Activated CD4-positive, alpha-beta memory T cell treated with anti-CD3 and anti-CD28 coated beads, Interleukin-2, amount 10 ng/mL, durations not matched to agents 7 days and 5 days (primary cell): ENCODE measurements at regions of chr2 and their contacts with region 1.

Region 1: GRCh38 chr2:26345545-26346453 is at the start of gene SELENOI:
- DNase-seq: peak; percentile 99
- H3K4me3 Mint-ChIP-seq: peak within 1 kb of the TSS; percentile 94
- H3K27ac Mint-ChIP-seq: peak within 1 kb of the TSS; percentile 89
- H3K4me1 Mint-ChIP-seq: peaks cover 38% of the 10 kb centered on the region
- H3K27me3 Mint-ChIP-seq: no peaks in the 10 kb centered on the region
- total RNA-seq, gene SELENOI: 22.9 to 31.4 TPM

Region 2: GRCh38 chr2:26244309-26245121 is 101.3 kb before region 1 on chr2 and contains the starts of genes HADHA and HADHB:
- CTCF ChIA-PET with region 1: interaction called, 4 read pairs
- POLR2A ChIA-PET with region 1: interaction called, 66 read pairs
- DNase-seq: peak; percentile 84
- H3K4me3 Mint-ChIP-seq: peak within 1 kb of the TSS; percentile 100
- H3K27ac Mint-ChIP-seq: peak within 1 kb of the TSS; percentile 98
- H3K4me1 Mint-ChIP-seq: peaks cover 55% of the 10 kb centered on the region
- H3K27me3 Mint-ChIP-seq: no peaks in the 10 kb centered on the region
- total RNA-seq, gene HADHA: 108 to 110 TPM
- total RNA-seq, gene HADHB: 71.4 to 72.6 TPM

Region 3: DNA sequence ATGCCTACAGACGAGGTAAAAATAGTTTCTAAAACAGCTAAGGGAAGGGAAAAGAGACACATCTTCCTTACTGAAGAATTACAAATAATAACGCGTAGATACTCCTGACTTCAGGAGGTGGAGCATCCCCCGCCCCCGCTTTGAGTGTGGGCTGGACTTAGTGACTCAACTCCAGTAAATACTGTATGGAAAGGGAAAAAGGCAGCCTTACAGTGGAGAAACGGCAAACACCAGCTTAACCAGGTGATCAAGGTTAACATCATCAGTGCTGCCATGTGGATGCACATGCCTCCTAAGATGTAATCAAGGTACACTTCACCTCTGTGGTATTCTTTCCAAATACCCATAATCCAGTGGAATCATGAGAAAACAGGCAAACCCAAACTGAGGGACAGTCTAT is 53.1 kb before region 1 on chr2:
- CTCF ChIA-PET with region 1: no interaction called
- POLR2A ChIA-PET with region 1: no interaction called
- DNase-seq: no peak
- H3K4me3 Mint-ChIP-seq: no peak overlapping the region
- H3K27ac Mint-ChIP-seq: no peak overlapping the region
- H3K4me1 Mint-ChIP-seq: no peaks in the 10 kb centered on the region
- H3K27me3 Mint-ChIP-seq: peaks cover 19% of the 10 kb centered on the region

Region 4: GRCh38 chr2:26330113-26330549 is 15.7 kb before region 1 on chr2:
- CTCF ChIA-PET with region 1: interaction called, 15 read pairs
- POLR2A ChIA-PET with region 1: interaction called, 24 read pairs
- DNase-seq: peak; percentile 88
- H3K4me3 Mint-ChIP-seq: no peak overlapping the region
- H3K27ac Mint-ChIP-seq: no peak overlapping the region
- H3K4me1 Mint-ChIP-seq: peaks cover 41% of the 10 kb centered on the region
- H3K27me3 Mint-ChIP-seq: no peaks in the 10 kb centered on the region

Region 5: GRCh38 chr2:26335231-26335630 is 10.6 kb before region 1 on chr2:
- CTCF ChIA-PET with region 1: interaction called, 15 read pairs
- POLR2A ChIA-PET with region 1: interaction called, 24 read pairs
- DNase-seq: no peak
- H3K4me3 Mint-ChIP-seq: no peak overlapping the region
- H3K27ac Mint-ChIP-seq: no peak overlapping the region
- H3K4me1 Mint-ChIP-seq: peaks cover 12% of the 10 kb centered on the region
- H3K27me3 Mint-ChIP-seq: no peaks in the 10 kb centered on the region

Region 6: DNA sequence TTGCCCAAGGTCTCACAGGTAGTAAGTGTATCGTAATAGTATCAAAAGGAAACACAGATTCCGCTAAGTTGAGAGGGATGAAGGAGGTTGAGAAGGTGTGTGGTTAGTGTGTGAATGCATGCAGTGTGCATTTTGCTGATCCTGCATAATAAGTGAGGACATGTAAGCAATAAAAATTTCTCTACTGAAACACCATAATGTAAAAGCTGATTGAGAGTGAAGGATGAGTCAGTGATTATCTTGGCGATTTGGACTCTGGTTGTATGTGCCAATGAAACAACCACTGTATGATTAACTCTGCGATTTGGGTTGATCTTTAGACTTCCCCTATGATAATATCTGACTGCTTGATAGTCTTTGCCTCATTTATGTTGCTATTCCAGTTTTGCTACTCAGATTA is 17.5 kb after region 1 on chr2:
- CTCF ChIA-PET with region 1: interaction called, 4 read pairs
- POLR2A ChIA-PET with region 1: interaction called, 21 read pairs
- DNase-seq: no peak
- H3K4me3 Mint-ChIP-seq: no peak overlapping the region
- H3K27ac Mint-ChIP-seq: peak overlapping the region; percentile 25
- H3K4me1 Mint-ChIP-seq: peaks cover 25% of the 10 kb centered on the region
- H3K27me3 Mint-ChIP-seq: no peaks in the 10 kb centered on the region